ENCODE measurements at regions of chr4 and their contacts with region 1.

Region 1: GRCh38 chr4:138870737-138871554 is 144.6 kb upstream of the NOCT start:
- DNase-seq: peak; percentile 63
- ATAC-seq: peak; percentile 45
- H3K4me3 Mint-ChIP-seq: no peak overlapping the region
- H3K27ac Mint-ChIP-seq: no peak overlapping the region
- H3K4me1 Mint-ChIP-seq: no peaks in the 10 kb centered on the region
- H3K27me3 Mint-ChIP-seq: peaks cover 7% of the 10 kb centered on the region
- CTCF ChIP-seq: peak; percentile 72

Region 2: DNA sequence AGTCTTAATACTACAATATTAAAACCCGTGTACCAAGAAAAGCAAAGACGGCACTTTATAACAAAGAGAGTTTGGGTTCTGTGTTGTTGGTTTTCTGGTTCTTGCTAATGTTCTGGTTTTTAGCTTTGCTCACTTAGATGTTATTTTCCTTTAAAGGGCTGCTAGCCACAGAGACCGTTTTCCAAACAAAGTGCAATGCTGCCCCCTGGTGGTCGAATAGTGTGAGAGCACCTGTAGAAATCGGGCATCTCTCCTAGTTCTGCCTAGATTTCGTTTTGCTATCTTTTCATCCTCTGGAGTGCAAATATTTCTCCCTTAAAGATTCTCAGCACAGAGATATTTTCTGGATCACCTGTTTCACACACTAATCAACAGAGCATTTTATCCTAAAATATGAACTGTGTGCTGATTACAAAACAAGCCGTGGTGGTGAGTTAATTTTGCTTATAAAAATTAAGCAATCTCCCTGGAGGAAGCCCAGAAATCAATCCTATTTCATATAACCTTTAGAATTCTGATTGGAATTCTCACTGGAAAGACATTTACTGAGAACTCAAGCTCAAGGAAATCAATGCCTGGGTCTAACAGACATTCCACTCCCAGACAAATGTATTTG is 189.8 kb before region 1 on chr4:
- CTCF ChIA-PET with region 1: interaction called, 17 read pairs
- POLR2A ChIA-PET with region 1: no interaction called
- intact Hi-C with region 1: loop called (anchors 5 kb)
- DNase-seq: peak; percentile 81
- ATAC-seq: peak; percentile 47
- H3K4me3 Mint-ChIP-seq: no peak overlapping the region
- H3K27ac Mint-ChIP-seq: no peak overlapping the region
- H3K4me1 Mint-ChIP-seq: no peaks in the 10 kb centered on the region
- H3K27me3 Mint-ChIP-seq: peaks cover 8% of the 10 kb centered on the region
- CTCF ChIP-seq: peak; percentile 92

Region 3: DNA sequence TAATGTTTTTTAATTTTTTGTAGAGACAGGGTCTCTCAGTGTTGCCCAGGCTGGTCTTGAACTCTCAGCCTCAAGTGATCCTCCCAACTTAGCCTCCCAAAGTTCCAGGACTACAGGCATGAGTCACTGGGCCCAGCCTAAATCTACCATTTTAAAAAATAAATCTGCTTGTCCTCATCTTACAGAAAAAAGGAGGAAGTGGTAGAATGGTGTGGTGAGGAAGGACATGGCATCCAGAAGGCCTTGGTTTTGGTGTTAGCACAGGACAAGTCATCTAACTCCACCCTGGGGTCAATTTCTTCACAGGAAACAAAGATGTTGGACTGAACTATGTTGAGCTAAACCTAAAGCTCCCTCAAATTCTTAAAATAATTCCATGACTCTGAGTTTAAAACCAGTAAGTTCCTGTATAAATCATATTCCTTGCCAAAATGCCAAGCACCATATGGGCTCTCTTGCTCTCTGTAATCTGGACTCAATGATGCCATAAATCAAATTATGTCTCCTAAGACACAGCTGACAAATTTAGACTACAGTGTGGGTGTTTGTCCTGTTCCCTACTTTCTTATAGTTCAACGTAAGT is 109.2 kb before region 1 on chr4:
- CTCF ChIA-PET with region 1: no interaction called
- POLR2A ChIA-PET with region 1: no interaction called
- intact Hi-C with region 1: no loop called
- DNase-seq: no peak
- ATAC-seq: no peak
- H3K4me3 Mint-ChIP-seq: no peak overlapping the region
- H3K27ac Mint-ChIP-seq: no peak overlapping the region
- H3K4me1 Mint-ChIP-seq: no peaks in the 10 kb centered on the region
- H3K27me3 Mint-ChIP-seq: no peaks in the 10 kb centered on the region
- CTCF ChIP-seq: no peak

Region 4: DNA sequence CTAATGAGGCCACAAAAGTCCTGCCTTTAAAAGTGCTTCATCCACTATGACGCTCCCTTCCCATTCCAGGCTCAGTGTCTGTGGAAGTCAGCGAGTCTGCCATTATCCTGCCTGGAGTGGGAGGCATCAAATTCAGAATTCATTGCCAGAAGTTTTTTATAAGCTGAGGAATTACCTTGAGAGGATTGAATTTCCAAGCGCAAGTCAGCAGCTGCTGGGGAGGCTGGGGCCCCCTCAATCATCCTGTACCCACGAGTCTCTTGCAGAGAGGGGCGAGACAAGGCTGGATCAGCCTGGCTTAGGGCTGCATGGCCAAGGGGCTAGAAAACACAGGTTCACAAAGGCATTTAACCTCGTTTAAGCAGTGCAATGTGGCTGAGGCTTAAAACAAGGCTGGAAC is 25.9 kb before region 1 on chr4:
- CTCF ChIA-PET with region 1: interaction called, 11 read pairs
- POLR2A ChIA-PET with region 1: no interaction called
- intact Hi-C with region 1: no loop called
- DNase-seq: no peak
- ATAC-seq: no peak
- H3K4me3 Mint-ChIP-seq: no peak overlapping the region
- H3K27ac Mint-ChIP-seq: no peak overlapping the region
- H3K4me1 Mint-ChIP-seq: no peaks in the 10 kb centered on the region
- H3K27me3 Mint-ChIP-seq: peaks cover 12% of the 10 kb centered on the region
- CTCF ChIP-seq: no peak

Region 5: GRCh38 chr4:138851391-138852335 is 19.3 kb before region 1 on chr4:
- CTCF ChIA-PET with region 1: interaction called, 11 read pairs
- POLR2A ChIA-PET with region 1: no interaction called
- intact Hi-C with region 1: no loop called
- DNase-seq: no peak
- ATAC-seq: no peak
- H3K4me3 Mint-ChIP-seq: no peak overlapping the region
- H3K27ac Mint-ChIP-seq: no peak overlapping the region
- H3K4me1 Mint-ChIP-seq: no peaks in the 10 kb centered on the region
- H3K27me3 Mint-ChIP-seq: peaks cover 13% of the 10 kb centered on the region
- CTCF ChIP-seq: no peak

Region 6: DNA sequence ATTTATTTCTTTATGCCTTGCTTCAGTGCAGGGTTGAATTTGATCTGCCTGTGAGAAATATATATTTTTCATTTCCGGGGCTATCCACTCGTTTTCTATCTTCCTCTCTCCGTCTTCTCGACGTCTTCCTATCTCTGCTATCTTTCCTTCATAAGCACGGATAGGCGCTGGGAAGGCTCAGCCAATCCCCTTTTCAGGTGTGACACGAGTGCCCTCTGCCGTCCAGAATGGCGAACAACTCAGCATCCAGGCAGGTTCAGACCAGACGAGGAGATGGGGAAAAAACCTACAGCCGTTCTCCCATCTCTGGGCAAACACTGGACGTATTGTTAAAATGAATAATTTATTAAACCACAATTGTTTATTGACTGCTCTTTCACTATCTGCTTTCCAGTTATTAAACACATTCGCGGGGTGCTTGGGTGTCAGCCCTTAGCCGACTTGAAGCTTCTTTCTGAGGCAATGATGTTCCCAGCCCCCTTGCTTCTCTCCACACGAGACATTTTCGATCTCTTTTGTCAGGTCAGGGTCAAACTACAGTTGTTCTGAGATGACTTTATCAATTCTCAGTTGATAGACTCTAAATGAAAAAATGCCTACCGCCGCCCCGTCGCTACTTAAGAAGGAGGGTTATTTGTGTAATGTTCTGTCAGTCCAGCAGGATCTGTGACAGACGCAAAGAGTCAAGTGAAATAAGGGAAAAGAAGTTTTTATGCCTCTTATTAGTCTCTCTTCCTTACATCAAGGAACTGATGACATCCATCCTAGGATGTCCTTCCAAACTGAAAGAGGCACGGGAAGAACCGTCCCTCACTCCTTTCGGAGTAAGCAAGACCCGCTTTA is 48.4 kb after region 1 on chr4:
- CTCF ChIA-PET with region 1: interaction called, 13 read pairs
- POLR2A ChIA-PET with region 1: no interaction called
- intact Hi-C with region 1: no loop called
- DNase-seq: peak; percentile 79
- ATAC-seq: peak; percentile 86
- H3K4me3 Mint-ChIP-seq: no peak overlapping the region
- H3K27ac Mint-ChIP-seq: no peak overlapping the region
- H3K4me1 Mint-ChIP-seq: no peaks in the 10 kb centered on the region
- H3K27me3 Mint-ChIP-seq: peaks cover 3% of the 10 kb centered on the region
- CTCF ChIP-seq: peak; percentile 86

Measured in activated CD8-positive, alpha-beta T cell treated with anti-CD3 and anti-CD28 coated beads for 36 hours (primary cell).